Caco-2 (cell line): ENCODE measurements at regions of chr6 and their contacts with region 1.

Region 1: GRCh38 chr6:163892824-163893561 is 478.5 kb downstream of the QKI start:
- DNase-seq: no peak
- H3K4me3 ChIP-seq: no peak overlapping the region
- H3K4me3 Mint-ChIP-seq: no peak overlapping the region
- H3K27ac Mint-ChIP-seq: no peak overlapping the region
- H3K4me1 ChIP-seq: no peaks in the 10 kb centered on the region
- H3K4me1 Mint-ChIP-seq: no peaks in the 10 kb centered on the region
- H3K27me3 ChIP-seq: no peaks in the 10 kb centered on the region
- H3K27me3 Mint-ChIP-seq: no peaks in the 10 kb centered on the region
- CTCF ChIP-seq: no peak

Region 2: GRCh38 chr6:163626073-163626867 is 266.7 kb before region 1 on chr6:
- CTCF ChIA-PET with region 1: no interaction called
- POLR2A ChIA-PET with region 1: no interaction called
- intact Hi-C with region 1: no loop called
- DNase-seq: no peak
- H3K4me3 ChIP-seq: no peak overlapping the region
- H3K4me3 Mint-ChIP-seq: no peak overlapping the region
- H3K27ac Mint-ChIP-seq: no peak overlapping the region
- H3K4me1 ChIP-seq: no peaks in the 10 kb centered on the region
- H3K4me1 Mint-ChIP-seq: no peaks in the 10 kb centered on the region
- H3K27me3 ChIP-seq: no peaks in the 10 kb centered on the region
- H3K27me3 Mint-ChIP-seq: no peaks in the 10 kb centered on the region
- CTCF ChIP-seq: no peak

Region 3: DNA sequence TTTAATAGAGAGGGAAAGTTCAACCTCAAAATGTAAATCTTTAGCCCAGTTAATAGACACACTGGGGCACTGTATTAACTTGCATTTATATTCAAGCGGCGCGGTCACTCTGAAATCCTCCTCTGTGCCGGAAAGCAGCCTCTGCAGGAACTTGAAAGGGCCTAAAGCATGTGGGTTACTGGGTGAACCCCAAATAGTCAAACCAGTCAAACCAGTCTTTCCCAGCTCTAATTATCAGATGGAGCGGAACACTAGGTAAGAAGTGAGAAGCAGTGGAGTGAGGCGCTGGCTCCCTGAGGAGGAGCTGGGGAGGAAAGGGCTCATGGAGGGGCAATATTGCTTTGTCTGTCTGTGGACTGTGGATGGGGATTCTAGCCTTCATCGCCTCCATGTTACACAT is 52.8 kb after region 1 on chr6:
- CTCF ChIA-PET with region 1: no interaction called
- POLR2A ChIA-PET with region 1: no interaction called
- intact Hi-C with region 1: loop called (anchors 5 kb)
- DNase-seq: no peak
- H3K4me3 ChIP-seq: no peak overlapping the region
- H3K4me3 Mint-ChIP-seq: no peak overlapping the region
- H3K27ac Mint-ChIP-seq: no peak overlapping the region
- H3K4me1 ChIP-seq: peaks cover 7% of the 10 kb centered on the region
- H3K4me1 Mint-ChIP-seq: peaks cover 4% of the 10 kb centered on the region
- H3K27me3 ChIP-seq: no peaks in the 10 kb centered on the region
- H3K27me3 Mint-ChIP-seq: peaks cover 3% of the 10 kb centered on the region
- CTCF ChIP-seq: no peak